K562 (cell line): ENCODE measurements at regions of chr5 and their contacts with region 1.

Region 1: DNA sequence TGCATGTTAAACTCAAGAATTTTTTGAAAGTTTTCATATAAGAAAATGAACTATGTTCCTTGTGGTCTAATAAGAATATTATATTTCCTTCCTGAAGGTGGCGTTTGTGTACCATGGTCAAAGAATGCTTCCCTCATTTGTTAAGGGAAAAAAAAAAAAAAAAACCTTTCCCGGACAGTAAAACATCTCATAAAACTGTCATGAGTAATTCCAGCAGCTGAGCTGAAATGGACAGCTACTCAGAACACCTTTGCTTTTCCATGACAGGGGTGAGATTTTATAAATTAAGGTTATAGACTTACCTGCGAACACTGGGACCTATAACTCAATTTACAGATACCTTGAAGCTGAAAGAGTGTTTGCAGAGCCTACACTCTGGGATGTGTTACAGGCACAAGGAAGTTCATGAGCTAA is 113.2 kb upstream of the RANBP3L start:
- DNase-seq: peak; percentile 32 to 58 (median 40)
- ATAC-seq: peak; percentile 57; the same call in 2 of the 3 replicates
- H3K4me3 ChIP-seq: no peak overlapping the region
- H3K27ac ChIP-seq: no peak overlapping the region
- H3K4me1 ChIP-seq: peaks cover 0 to 15% of the 10 kb centered on the region in 2 experiments; a peak in 2 of 5 replicates
- H3K27me3 ChIP-seq: no peaks in the 10 kb centered on the region
- CTCF ChIP-seq: peak; percentile 48 to 79 (median 52); a peak in 4 of 6 replicates
- EP300 ChIP-seq: no peak
- POLR2A ChIP-seq: no peak
- RAD21 ChIP-seq: peak; percentile 69 to 79

Region 2: DNA sequence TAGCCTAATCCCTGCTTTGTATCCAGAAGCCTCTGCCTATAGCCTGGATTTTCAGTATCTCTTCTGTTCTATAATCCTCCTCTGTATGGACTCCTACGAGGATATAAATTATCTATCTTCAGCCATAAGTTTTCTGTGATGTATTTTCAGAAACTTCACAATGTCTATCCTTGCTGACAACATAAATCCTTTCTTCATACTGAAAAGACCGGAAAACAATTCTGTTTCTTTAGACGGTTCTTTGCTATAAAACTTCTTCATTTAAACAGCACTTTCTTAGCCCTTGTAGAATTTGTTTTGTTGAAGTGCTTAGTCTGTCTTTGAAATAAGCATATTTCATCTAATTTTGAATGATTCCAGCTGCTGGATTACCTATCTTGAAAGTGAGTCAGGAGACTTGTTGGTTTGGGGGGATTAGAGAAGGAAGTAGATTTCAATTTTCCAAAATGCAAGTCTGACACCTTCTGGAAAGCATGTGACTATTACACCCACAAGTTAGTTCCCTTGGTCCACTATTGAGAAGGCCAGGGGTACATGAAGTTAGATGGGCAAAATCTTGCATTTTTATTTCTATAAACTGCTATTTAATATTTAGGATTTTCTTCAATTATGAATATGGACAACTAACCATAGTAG is 16.9 kb before region 1 on chr5:
- CTCF ChIA-PET with region 1: no interaction called
- POLR2A ChIA-PET with region 1: no interaction called
- in situ Hi-C with region 1: no loop called
- intact Hi-C with region 1: no loop called
- DNase-seq: peak in 1 of 4 experiments; percentile 43
- ATAC-seq: peak; percentile 79
- H3K4me3 ChIP-seq: no peak overlapping the region
- H3K27ac ChIP-seq: no peak overlapping the region
- H3K4me1 ChIP-seq: no peaks in the 10 kb centered on the region
- H3K27me3 ChIP-seq: 0 out of 5 replicates have a peak, but pooled peaks cover 0 to 5% of the 10 kb centered on the region in 2 experiments
- CTCF ChIP-seq: peak; percentile 41 to 65 (median 48); a peak in 4 of 6 replicates
- EP300 ChIP-seq: no peak
- POLR2A ChIP-seq: no peak
- RAD21 ChIP-seq: peak; percentile 55 to 77

Region 3: DNA sequence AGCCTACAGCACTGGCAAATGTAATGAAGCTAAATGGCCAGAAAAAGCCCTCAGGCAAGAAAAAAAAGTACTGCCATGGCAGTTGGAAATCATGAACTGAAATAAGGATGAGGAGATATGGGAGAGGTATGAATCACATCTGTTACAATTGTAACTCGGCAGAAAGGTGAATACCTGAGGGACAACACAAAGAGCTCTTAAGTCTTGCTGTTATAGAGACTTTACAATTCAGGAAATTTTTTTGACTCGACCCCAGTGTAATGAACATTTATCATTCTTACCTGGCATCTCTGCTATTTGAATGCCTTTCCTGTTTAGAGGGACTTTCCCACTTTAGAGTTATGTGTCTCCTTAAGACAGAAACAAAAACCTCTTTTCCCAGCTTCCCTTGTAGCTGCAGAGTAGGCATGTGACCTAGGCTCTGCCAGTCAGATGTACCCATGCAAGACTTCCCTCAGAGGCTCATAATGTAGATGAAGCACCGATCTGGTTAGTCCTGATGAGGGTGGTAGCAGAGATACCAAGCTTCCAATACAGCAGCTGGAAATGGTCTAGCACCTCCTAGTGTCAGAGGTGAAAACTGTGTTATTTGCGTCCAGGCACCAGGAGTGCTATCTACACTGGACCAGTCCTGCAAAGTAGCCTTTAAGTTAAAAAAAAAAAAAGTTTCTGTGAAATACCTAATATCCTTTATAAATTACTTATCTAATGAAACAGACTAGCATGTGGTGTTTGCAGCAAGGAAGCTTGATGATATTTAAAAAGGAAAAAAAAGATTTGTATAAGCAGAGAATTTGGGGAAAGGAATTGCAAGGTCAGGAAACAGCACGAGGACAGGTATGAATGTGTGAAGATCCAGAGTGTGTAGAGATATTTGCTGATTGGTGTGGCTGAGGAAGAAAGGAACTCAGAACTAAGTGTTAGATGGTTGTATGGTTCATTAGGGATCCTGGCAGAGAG is 44.6 kb after region 1 on chr5:
- CTCF ChIA-PET with region 1: interaction called, 4 read pairs
- POLR2A ChIA-PET with region 1: interaction called, 5 read pairs
- in situ Hi-C with region 1: no loop called
- intact Hi-C with region 1: loop called (anchors 2 kb)
- DNase-seq: peak; percentile 62 to 81 (median 74)
- ATAC-seq: peak; percentile 91
- H3K4me3 ChIP-seq: no peak overlapping the region
- H3K27ac ChIP-seq: no peak overlapping the region
- H3K4me1 ChIP-seq: no peaks in the 10 kb centered on the region
- H3K27me3 ChIP-seq: 0 out of 5 replicates have a peak, but pooled peaks cover 0 to 4% of the 10 kb centered on the region in 2 experiments
- CTCF ChIP-seq: peak; percentile 72 to 81 (median 73)
- EP300 ChIP-seq: no peak
- POLR2A ChIP-seq: no peak
- RAD21 ChIP-seq: peak; percentile 47 to 76; a peak in 3 of 4 replicates

Region 4: DNA sequence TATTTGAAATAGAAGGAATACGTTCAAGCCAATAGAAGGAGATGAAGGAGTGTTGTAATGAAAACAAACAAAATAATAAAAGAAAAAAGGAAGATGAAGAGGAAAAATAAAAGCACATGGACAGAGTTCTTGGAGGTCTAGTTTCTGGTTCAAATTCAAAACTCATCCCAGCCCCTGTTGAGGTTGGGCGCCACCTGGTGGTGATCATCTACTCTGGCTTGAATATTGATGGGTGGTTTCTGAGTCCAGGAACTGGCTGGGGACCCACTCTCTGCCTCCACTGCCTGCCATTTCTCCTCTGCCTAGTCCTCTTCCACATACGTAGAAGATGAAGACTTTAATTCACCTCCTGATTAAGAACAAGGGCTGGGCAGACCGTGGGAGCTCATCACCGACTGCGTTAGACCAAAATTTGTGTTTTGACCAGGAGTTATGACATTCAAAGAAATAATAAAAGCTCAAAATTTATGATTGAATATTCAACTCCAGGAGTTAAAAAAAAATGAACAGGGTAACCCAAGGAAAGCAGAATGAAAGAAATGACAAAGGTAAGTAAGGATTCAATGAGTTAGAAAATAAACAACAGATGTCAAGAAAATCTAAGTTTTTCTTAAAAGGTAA is 92.6 kb after region 1 on chr5:
- CTCF ChIA-PET with region 1: interaction called, 33 read pairs
- POLR2A ChIA-PET with region 1: interaction called, 4 read pairs
- in situ Hi-C with region 1: loop called (anchors 5 kb)
- intact Hi-C with region 1: loop called (anchors 1 kb)
- DNase-seq: peak; percentile 84 to 87 (median 86)
- ATAC-seq: peak; percentile 95
- H3K4me3 ChIP-seq: no peak overlapping the region
- H3K27ac ChIP-seq: no peak overlapping the region
- H3K4me1 ChIP-seq: no peaks in the 10 kb centered on the region
- H3K27me3 ChIP-seq: peaks cover 0 to 4% of the 10 kb centered on the region in 2 experiments; a peak in 1 of 5 replicates
- CTCF ChIP-seq: peak; percentile 83 to 88 (median 86)
- EP300 ChIP-seq: no peak
- POLR2A ChIP-seq: no peak
- RAD21 ChIP-seq: peak; percentile 81 to 92

Region 5: GRCh38 chr5:36695677-36696673 is 281.1 kb after region 1 on chr5:
- CTCF ChIA-PET with region 1: interaction called, 11 read pairs
- POLR2A ChIA-PET with region 1: interaction called, 3 read pairs
- in situ Hi-C with region 1: loop called (anchors 5 kb)
- intact Hi-C with region 1: loop called (anchors 1 kb)
- DNase-seq: peak; percentile 36 to 56 (median 45)
- ATAC-seq: peak; percentile 78
- H3K4me3 ChIP-seq: no peak overlapping the region
- H3K27ac ChIP-seq: no peak overlapping the region
- H3K4me1 ChIP-seq: peaks cover 0 to 7% of the 10 kb centered on the region in 2 experiments; a peak in 2 of 5 replicates
- H3K27me3 ChIP-seq: peaks cover 2 to 18% of the 10 kb centered on the region in 2 experiments; a peak in 3 of 5 replicates
- CTCF ChIP-seq: peak; percentile 75 to 79 (median 75)
- EP300 ChIP-seq: no peak
- POLR2A ChIP-seq: no peak
- RAD21 ChIP-seq: peak; percentile 42 to 64